Esophagus muscularis mucosa (tissue), 4 donors: ENCODE measurements at regions of chr2 and their contacts with region 1.

Region 1: DNA sequence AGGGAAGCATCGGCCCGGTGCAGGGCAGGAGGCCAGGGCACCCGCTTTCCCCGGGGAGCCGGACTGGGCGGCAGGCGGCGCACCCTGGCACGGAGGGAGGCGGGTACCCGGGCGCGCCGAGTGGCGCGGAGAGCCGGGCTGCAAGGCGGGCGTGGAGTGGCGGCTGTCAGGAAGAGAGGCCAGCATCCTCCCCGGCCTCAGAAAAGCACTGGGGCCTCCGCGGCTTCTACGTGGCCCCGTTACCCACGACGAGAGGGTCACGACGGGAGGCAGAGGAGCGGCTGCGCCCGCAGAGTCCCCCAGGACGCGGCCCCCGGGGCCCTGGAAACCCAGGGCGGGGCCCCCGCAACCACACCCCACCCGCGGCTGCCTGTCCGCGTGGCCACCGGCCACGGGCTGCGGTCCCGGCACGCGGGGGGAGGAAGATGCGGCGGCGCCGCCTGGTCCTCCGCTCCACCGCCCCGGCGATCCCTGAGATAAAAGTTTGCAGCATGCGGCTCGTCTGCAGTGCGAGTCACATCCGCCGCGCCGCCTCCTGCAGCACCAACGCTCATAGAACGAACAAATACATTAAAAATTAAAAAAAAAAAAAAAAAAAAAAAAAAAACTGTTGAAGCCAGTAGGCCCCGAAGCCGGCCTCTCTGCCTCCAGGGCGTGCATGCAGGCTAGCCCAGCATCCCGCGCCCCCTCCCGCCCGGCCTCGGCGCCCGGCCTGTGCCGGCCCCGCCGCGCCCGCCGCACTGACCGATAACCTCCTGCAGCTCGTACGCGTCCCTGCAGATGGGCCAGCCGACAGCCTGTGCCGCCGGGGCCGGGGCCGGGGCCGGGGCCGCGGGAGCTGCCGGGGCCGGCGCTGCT is 683 bp downstream of the STK39 start:
- DNase-seq: peak; percentile 91
- H3K4me3 ChIP-seq: peak overlapping the region; percentile 84 to 93 (median 89)
- H3K27ac ChIP-seq: peak overlapping the region; percentile 90 to 93 (median 90)
- H3K4me1 ChIP-seq: peaks cover 31 to 70% (median 63%) of the 10 kb centered on the region in 4 donors
- H3K27me3 ChIP-seq: no peaks in the 10 kb centered on the region
- CTCF ChIP-seq: peak; percentile 30 to 46 (median 37)
- EP300 ChIP-seq: no peak
- POLR2A ChIP-seq: no peak

Region 2: GRCh38 chr2:167292430-167293171 is 954.1 kb before region 1 on chr2:
- intact Hi-C with region 1: loop called (anchors 10 kb)
- DNase-seq: no peak
- H3K4me3 ChIP-seq: peak within 1 kb of the TSS; percentile 70 to 91 (median 82)
- H3K27ac ChIP-seq: peak within 1 kb of the TSS; percentile 79 to 86 (median 84)
- H3K4me1 ChIP-seq: peaks cover 20 to 29% (median 25%) of the 10 kb centered on the region in 4 donors
- H3K27me3 ChIP-seq: peaks cover 0 to 58% (median 18%) of the 10 kb centered on the region in 4 donors
- CTCF ChIP-seq: peak in 2 of 3 experiments; percentile 23 to 24
- EP300 ChIP-seq: no peak
- POLR2A ChIP-seq: no peak

Region 3: DNA sequence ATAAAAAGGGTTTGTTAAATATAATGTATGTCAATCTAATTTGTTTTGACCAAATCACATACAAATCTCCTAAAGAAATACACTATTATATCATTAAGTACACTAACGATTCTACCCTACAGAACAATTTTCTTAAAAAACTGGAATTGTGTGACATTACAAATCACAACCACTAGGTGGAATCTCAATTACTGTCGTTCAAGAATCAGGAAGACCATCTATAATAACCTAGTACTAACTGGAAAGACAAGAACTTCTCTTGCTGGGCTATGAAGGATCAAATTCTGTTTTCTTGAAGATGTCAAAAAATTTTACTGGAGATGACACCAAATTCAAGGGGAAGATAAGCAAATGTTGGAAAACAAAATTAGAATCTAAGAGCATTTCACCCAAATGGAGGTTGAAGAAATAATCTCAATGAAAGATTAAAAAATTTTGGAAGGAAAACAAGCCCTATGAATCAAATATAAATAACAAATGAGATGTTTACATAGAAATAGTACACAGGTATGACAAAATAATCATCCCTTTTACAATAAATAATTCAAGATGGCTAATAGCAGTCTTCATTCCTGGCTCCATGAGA is 110.2 kb before region 1 on chr2:
- intact Hi-C with region 1: loop called (anchors 5 kb)
- DNase-seq: no peak
- H3K4me3 ChIP-seq: no peak overlapping the region
- H3K27ac ChIP-seq: no peak overlapping the region
- H3K4me1 ChIP-seq: peaks cover 0 to 5% (median 2%) of the 10 kb centered on the region in 4 donors
- H3K27me3 ChIP-seq: no peaks in the 10 kb centered on the region
- CTCF ChIP-seq: peak; percentile 52 to 62 (median 55)
- EP300 ChIP-seq: no peak
- POLR2A ChIP-seq: no peak

Region 4: GRCh38 chr2:168311261-168311910 is 64.7 kb after region 1 on chr2:
- intact Hi-C with region 1: loop called (anchors 5 kb)
- DNase-seq: no peak
- H3K4me3 ChIP-seq: no peak overlapping the region
- H3K27ac ChIP-seq: peak overlapping the region in 3 of 4 donors; percentile 54 to 69 (median 64)
- H3K4me1 ChIP-seq: peaks cover 25 to 49% (median 46%) of the 10 kb centered on the region in 4 donors
- H3K27me3 ChIP-seq: no peaks in the 10 kb centered on the region
- CTCF ChIP-seq: no peak
- EP300 ChIP-seq: no peak
- POLR2A ChIP-seq: no peak